Heart left ventricle (tissue), 16 donors: ENCODE measurements at regions of chr9 and their contacts with region 1.

Region 1: DNA sequence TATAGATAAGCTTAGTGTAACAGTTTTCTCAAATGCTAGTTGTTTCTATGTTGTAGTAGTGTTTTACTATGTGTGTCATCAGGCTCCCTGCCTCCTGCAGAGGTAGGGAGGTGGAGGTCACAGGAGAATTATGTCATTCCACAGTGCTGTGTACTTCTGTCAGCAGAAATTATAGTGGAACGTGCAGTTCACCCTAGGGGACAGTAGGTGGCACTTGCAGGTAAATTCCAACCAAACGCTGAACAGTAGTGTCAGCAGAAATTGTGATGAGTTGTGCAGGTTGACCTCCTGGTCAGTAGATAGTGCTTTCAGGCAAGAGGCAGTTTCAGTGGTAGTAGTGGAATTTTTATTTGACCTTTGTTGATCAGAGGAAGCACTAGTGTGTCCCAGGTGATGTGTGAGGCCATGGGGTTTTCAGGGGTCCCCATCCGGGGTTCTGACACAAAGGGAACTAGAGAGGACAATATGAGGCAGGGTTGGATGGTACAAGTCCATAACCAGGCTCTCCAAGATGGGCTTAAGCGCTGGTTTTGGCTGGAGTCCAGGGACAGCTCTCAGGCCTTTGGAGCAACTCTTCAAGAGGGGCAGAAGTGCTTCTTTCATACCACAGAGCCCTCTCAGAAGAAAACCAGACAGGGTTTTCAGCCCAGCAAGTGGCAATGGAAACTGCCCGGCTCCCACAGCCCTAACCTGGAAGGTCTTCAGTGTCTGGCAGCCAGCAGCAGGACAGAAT is 402.9 kb downstream of the CYLC2 start:
- DNase-seq: peak in 2 of 5 donors; percentile 11 to 30
- ATAC-seq: peak in 3 of 4 donors; percentile 24 to 58 (median 50)
- H3K4me3 ChIP-seq: no peak overlapping the region
- H3K27ac ChIP-seq: no peak overlapping the region
- H3K4me1 ChIP-seq: no peaks in the 10 kb centered on the region
- H3K27me3 ChIP-seq: no peaks in the 10 kb centered on the region
- CTCF ChIP-seq: peak; percentile 39 to 66 (median 54)
- POLR2A ChIP-seq: no peak

Region 2: GRCh38 chr9:103335461-103335860 is 62.6 kb before region 1 on chr9:
- intact Hi-C with region 1: loop called in 1 of 10 experiments (anchors 10 kb)
- DNase-seq: no peak
- ATAC-seq: no peak
- H3K4me3 ChIP-seq: no peak overlapping the region
- H3K27ac ChIP-seq: no peak overlapping the region
- H3K4me1 ChIP-seq: no peaks in the 10 kb centered on the region
- H3K27me3 ChIP-seq: no peaks in the 10 kb centered on the region
- CTCF ChIP-seq: no peak
- POLR2A ChIP-seq: no peak

Region 3: DNA sequence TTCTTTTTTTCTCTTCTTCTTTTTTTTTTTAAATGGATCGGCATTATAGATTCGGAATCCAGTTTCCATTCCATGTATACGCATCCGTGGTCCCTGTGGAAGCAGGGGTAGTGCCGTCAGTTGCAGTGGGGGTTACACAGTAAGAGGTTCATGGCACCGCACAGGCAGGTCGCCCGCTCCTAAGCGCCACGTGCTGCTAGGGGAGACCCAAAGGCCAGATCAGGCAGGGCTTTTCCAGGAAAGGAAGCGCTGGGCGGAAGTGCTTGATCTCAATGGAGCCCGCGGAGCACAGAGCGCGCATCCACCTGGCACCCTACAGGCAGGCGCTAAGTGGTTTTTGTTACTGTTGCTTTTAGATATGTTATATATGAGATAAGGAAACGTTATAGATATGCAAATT is 931.2 kb after region 1 on chr9:
- intact Hi-C with region 1: no loop called
- DNase-seq: no peak
- ATAC-seq: no peak
- H3K4me3 ChIP-seq: no peak overlapping the region
- H3K27ac ChIP-seq: no peak overlapping the region
- H3K4me1 ChIP-seq: no peaks in the 10 kb centered on the region
- H3K27me3 ChIP-seq: no peaks in the 10 kb centered on the region
- CTCF ChIP-seq: no peak
- POLR2A ChIP-seq: no peak